Caco-2 (cell line): ENCODE measurements at regions of chr20 and their contacts with region 1.

Region 1: DNA sequence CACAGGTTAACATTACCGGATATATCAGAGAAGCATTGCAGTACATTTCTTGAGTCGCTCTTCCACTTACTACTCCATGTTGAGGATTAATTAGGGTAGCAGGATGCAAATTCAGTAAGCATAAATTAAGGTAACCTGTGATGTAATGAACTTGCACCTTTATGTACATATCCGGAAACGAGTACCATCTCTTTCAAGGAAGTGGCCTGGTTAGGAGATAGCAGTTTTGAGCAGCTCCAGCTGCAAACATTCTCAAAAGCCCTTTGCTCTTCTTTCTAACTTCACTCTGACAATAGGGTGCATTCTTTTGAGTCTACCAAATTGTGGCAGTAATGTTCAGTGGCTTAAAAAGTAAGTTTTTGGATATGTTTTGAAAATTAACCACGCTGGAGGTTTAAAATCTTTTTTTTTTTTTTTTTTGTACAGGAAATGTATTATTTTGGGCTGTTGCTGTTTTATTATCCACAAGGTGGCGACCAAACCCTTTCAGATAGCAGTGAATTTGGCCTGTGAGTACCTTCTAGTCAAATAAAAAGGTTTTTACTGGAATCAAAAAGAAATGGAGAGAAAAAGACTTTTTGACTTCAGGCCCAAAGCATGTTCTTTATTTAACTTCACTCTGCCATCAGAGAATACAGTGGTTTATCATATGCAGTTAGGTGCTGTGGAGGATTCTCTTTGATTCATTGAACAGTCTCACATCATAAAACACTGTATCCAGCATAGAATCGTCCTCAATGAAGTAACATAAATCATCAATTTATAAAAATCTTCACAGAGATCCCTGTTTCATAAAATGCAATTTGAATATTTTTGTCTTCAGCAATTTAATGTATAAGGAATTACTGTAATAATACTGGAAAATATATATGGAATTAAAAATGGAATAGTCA is 8.9 kb downstream of the FAM217B start:
- DNase-seq: peak; percentile 59 to 73
- H3K4me3 ChIP-seq: no peak overlapping the region
- H3K4me3 Mint-ChIP-seq: no peak overlapping the region
- H3K27ac Mint-ChIP-seq: no peak overlapping the region
- H3K4me1 ChIP-seq: no peaks in the 10 kb centered on the region
- H3K4me1 Mint-ChIP-seq: peaks cover 7% of the 10 kb centered on the region
- H3K27me3 ChIP-seq: no peaks in the 10 kb centered on the region
- H3K27me3 Mint-ChIP-seq: no peaks in the 10 kb centered on the region
- CTCF ChIP-seq: peak; percentile 86 to 91

Region 2: GRCh38 chr20:59933849-59934596 is 15.1 kb before region 1 on chr20:
- CTCF ChIA-PET with region 1: interaction called, 26 read pairs
- POLR2A ChIA-PET with region 1: interaction called, 4 read pairs
- intact Hi-C with region 1: no loop called
- DNase-seq: peak; percentile 94 to 99
- H3K4me3 ChIP-seq: peak overlapping the region; percentile 73
- H3K4me3 Mint-ChIP-seq: peak overlapping the region; percentile 84
- H3K27ac Mint-ChIP-seq: peak overlapping the region; percentile 59
- H3K4me1 ChIP-seq: peaks cover 21% of the 10 kb centered on the region
- H3K4me1 Mint-ChIP-seq: peaks cover 30% of the 10 kb centered on the region
- H3K27me3 ChIP-seq: no peaks in the 10 kb centered on the region
- H3K27me3 Mint-ChIP-seq: no peaks in the 10 kb centered on the region
- CTCF ChIP-seq: peak; percentile 98 to 100

Region 3: GRCh38 chr20:59985864-59986263 is 36.8 kb after region 1 on chr20:
- CTCF ChIA-PET with region 1: no interaction called
- POLR2A ChIA-PET with region 1: no interaction called
- intact Hi-C with region 1: loop called (anchors 5 kb)
- DNase-seq: peak; percentile 76 to 83
- H3K4me3 ChIP-seq: no peak overlapping the region
- H3K4me3 Mint-ChIP-seq: no peak overlapping the region
- H3K27ac Mint-ChIP-seq: no peak overlapping the region
- H3K4me1 ChIP-seq: no peaks in the 10 kb centered on the region
- H3K4me1 Mint-ChIP-seq: peaks cover 6% of the 10 kb centered on the region
- H3K27me3 ChIP-seq: no peaks in the 10 kb centered on the region
- H3K27me3 Mint-ChIP-seq: no peaks in the 10 kb centered on the region
- CTCF ChIP-seq: peak; percentile 93 to 94